Activated T-helper 2 cell treated with anti-CD3 and anti-CD28 coated beads, Interferon-gamma antibody, Interleukin-2, Interleukin-4, amounts not matched to agents 10 μg/mL and 5 μg/mL and 100 μg/mL, durations not matched to agents 14 hours and 24 hours and 36 hours (primary cell): ENCODE measurements at regions of chr12 and their contacts with region 1.

Region 1: GRCh38 chr12:127455347-127456265 is 811.4 kb upstream of the TMEM132C start:
- DNase-seq: no peak
- H3K4me3 Mint-ChIP-seq: no peak overlapping the region
- H3K27ac Mint-ChIP-seq: no peak overlapping the region
- H3K4me1 Mint-ChIP-seq: no peaks in the 10 kb centered on the region
- H3K27me3 Mint-ChIP-seq: peaks cover 19% of the 10 kb centered on the region

Region 2: GRCh38 chr12:127363392-127363791 is 92.2 kb before region 1 on chr12:
- intact Hi-C with region 1: no loop called
- DNase-seq: no peak
- H3K4me3 Mint-ChIP-seq: no peak overlapping the region
- H3K27ac Mint-ChIP-seq: no peak overlapping the region
- H3K4me1 Mint-ChIP-seq: no peaks in the 10 kb centered on the region
- H3K27me3 Mint-ChIP-seq: no peaks in the 10 kb centered on the region

Region 3: GRCh38 chr12:127411166-127411915 is 44.3 kb before region 1 on chr12:
- intact Hi-C with region 1: loop called (anchors 2 kb)
- DNase-seq: no peak
- H3K4me3 Mint-ChIP-seq: no peak overlapping the region
- H3K27ac Mint-ChIP-seq: no peak overlapping the region
- H3K4me1 Mint-ChIP-seq: no peaks in the 10 kb centered on the region
- H3K27me3 Mint-ChIP-seq: no peaks in the 10 kb centered on the region

Region 4: DNA sequence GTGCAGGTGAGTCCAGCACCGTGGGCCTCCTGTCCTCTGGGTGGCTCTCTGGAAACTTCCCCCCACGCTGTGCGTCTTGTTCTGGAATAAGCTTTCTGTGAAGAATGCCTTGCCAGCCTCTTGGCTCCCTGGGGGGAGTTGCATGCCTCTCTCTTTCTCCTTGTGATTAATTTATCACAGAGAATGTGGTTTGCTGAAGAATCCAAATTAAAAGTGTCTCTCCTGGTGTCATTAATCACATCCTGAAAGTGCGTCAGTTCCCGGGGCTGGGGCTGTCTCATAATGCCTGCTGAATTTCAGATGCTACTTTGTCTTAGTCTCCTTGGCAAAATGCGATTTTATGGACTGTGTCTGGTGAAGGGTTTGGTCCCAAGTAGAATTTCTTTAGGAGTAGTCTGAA is 23.6 kb after region 1 on chr12:
- intact Hi-C with region 1: no loop called
- DNase-seq: no peak
- H3K4me3 Mint-ChIP-seq: no peak overlapping the region
- H3K27ac Mint-ChIP-seq: no peak overlapping the region
- H3K4me1 Mint-ChIP-seq: no peaks in the 10 kb centered on the region
- H3K27me3 Mint-ChIP-seq: no peaks in the 10 kb centered on the region

Region 5: GRCh38 chr12:127928615-127929571 is 473.3 kb after region 1 on chr12:
- intact Hi-C with region 1: no loop called
- DNase-seq: no peak
- H3K4me3 Mint-ChIP-seq: no peak overlapping the region
- H3K27ac Mint-ChIP-seq: no peak overlapping the region
- H3K4me1 Mint-ChIP-seq: no peaks in the 10 kb centered on the region
- H3K27me3 Mint-ChIP-seq: no peaks in the 10 kb centered on the region